Mammary epithelial cell (primary cell): ENCODE measurements at regions of chr2 and their contacts with region 1.

Region 1: DNA sequence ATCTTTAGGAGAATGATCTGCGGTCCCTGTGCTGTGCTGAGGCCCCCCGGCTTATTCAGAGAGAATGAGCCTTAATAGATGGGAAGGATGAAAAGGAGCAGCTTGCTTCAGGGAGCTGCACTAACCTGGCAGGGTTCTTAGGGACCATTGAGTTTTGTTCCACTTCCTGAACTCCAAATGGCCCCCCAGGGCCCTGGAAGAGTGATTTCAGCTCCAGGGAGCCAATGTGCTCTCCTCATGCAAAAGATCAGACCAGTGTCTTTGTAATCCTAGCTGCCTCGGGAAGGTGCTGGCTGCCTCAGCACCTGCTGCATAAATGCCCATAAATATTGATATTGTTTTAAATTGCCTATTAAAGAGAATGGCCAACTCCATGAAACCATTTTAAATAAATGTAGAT is 210.2 kb downstream of the NCK2 start:
- DNase-seq: no peak
- H3K4me3 ChIP-seq: no peak overlapping the region
- H3K27ac ChIP-seq: no peak overlapping the region
- H3K4me1 ChIP-seq: peaks cover 11% of the 10 kb centered on the region
- H3K27me3 ChIP-seq: no peaks in the 10 kb centered on the region
- CTCF ChIP-seq: no peak

Region 2: GRCh38 chr2:105864262-105864661 is 90.6 kb before region 1 on chr2:
- CTCF ChIA-PET with region 1: no interaction called
- dilution Hi-C with region 1: loop called (anchors 5 kb)
- in situ Hi-C with region 1: no loop called
- intact Hi-C with region 1: no loop called
- DNase-seq: no peak
- H3K4me3 ChIP-seq: no peak overlapping the region
- H3K27ac ChIP-seq: no peak overlapping the region
- H3K4me1 ChIP-seq: peaks cover 14% of the 10 kb centered on the region
- H3K27me3 ChIP-seq: no peaks in the 10 kb centered on the region
- CTCF ChIP-seq: no peak